PC-9 (cell line): ENCODE measurements at regions of chr1 and their contacts with region 1.

Region 1: GRCh38 chr1:152189657-152190442 is 30.8 kb upstream of the RPTN start:
- DNase-seq: peak in 1 of 2 experiments; percentile 53
- H3K4me3 ChIP-seq: no peak overlapping the region
- H3K27ac ChIP-seq: peak overlapping the region; percentile 40; the same call in 1 of the 2 replicates
- H3K4me1 ChIP-seq: peaks cover 27% of the 10 kb centered on the region
- H3K27me3 ChIP-seq: peaks cover 22% of the 10 kb centered on the region; the same call in 1 of the 2 replicates
- CTCF ChIP-seq: peak; percentile 86

Region 2: DNA sequence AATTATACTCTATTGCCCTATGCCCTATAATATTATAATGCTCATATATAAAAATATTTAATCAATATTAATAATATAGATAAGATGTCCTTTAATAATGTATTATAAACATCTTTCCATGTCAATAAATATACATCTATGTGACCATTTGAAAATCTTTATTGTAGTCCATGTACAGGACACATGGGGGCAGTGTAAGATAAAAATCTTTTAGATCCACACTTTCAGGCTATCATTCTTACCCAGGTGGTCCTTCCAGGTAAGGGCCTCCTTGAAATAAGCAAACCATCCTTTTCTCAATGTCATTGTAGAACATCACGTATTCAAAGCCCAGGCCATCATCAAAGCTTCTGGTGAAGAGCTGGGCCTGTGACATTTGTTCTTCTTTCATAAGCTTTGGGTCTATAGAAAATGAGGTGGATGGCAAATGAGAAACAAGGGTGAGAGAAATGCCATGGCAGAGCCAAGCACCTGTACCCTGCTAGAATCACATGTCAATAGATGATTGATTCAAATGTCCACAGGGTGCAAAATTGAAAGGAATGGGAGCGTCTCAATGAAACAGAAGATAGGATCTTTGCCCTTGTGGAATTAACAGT is 300.8 kb before region 1 on chr1:
- CTCF ChIA-PET with region 1: no interaction called
- POLR2A ChIA-PET with region 1: no interaction called
- intact Hi-C with region 1: loop called (anchors 5 kb)
- DNase-seq: peak in 1 of 2 experiments; percentile 38
- H3K4me3 ChIP-seq: no peak overlapping the region
- H3K27ac ChIP-seq: no peak overlapping the region
- H3K4me1 ChIP-seq: peaks cover 20% of the 10 kb centered on the region
- H3K27me3 ChIP-seq: no peaks in the 10 kb centered on the region
- CTCF ChIP-seq: peak; percentile 69

Region 3: DNA sequence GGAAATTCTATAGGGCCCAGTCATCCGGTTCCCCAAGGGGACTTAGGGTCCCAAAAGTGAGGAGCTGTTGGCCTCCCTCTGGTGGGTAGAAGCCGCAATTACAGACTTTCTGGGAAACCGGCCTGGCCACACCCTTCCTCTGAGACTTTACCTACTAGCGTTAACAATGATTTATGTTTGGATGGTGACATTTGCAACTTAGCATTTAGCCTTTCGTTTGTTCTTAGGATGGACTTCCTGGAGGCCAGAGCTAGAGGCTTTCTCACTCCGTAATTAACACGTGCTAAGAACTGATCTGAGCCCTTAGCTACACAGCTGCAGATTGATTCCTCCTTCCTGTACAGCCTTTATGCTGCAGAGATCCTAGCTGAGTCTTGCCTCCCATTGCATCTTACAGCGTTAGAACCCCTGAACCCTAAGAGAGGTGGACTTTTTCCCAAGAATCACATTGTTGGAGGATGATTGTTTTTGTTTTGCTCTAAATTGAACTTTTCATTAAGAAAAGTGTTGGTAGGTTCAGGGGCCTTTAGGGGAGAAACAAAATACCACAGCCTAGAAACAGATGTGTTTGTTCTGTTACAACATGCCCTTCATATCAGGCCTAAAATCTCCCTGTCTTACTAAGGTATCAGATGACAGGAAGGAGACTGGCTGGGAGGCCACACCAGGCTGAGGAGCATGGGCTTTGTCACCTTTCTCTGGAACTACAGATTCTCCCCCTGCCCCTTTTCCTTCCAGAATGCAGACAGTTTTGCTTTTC is 155.0 kb before region 1 on chr1:
- CTCF ChIA-PET with region 1: interaction called, 15 read pairs
- POLR2A ChIA-PET with region 1: no interaction called
- intact Hi-C with region 1: no loop called
- DNase-seq: peak; percentile 78 to 90
- H3K4me3 ChIP-seq: peak overlapping the region; percentile 89
- H3K27ac ChIP-seq: peak overlapping the region; percentile 97
- H3K4me1 ChIP-seq: peaks cover 66% of the 10 kb centered on the region
- H3K27me3 ChIP-seq: no peaks in the 10 kb centered on the region
- CTCF ChIP-seq: peak; percentile 94

Region 4: GRCh38 chr1:152096121-152096865 is 93.6 kb before region 1 on chr1:
- CTCF ChIA-PET with region 1: no interaction called
- POLR2A ChIA-PET with region 1: no interaction called
- intact Hi-C with region 1: no loop called
- DNase-seq: no peak
- H3K4me3 ChIP-seq: no peak overlapping the region
- H3K27ac ChIP-seq: no peak overlapping the region
- H3K4me1 ChIP-seq: no peaks in the 10 kb centered on the region
- H3K27me3 ChIP-seq: no peaks in the 10 kb centered on the region
- CTCF ChIP-seq: no peak

Region 5: GRCh38 chr1:152227310-152227928 is 37.6 kb after region 1 on chr1:
- CTCF ChIA-PET with region 1: interaction called, 12 read pairs
- POLR2A ChIA-PET with region 1: no interaction called
- intact Hi-C with region 1: no loop called
- DNase-seq: no peak
- H3K4me3 ChIP-seq: no peak overlapping the region
- H3K27ac ChIP-seq: no peak overlapping the region
- H3K4me1 ChIP-seq: no peaks in the 10 kb centered on the region
- H3K27me3 ChIP-seq: peaks cover 11% of the 10 kb centered on the region
- CTCF ChIP-seq: no peak; the same call in 1 of the 2 replicates

Region 6: GRCh38 chr1:152440635-152441471 is 251.0 kb after region 1 on chr1:
- CTCF ChIA-PET with region 1: no interaction called
- POLR2A ChIA-PET with region 1: no interaction called
- intact Hi-C with region 1: loop called (anchors 1 kb)
- DNase-seq: peak in 1 of 2 experiments; percentile 55
- H3K4me3 ChIP-seq: no peak overlapping the region
- H3K27ac ChIP-seq: no peak overlapping the region
- H3K4me1 ChIP-seq: no peaks in the 10 kb centered on the region
- H3K27me3 ChIP-seq: peaks cover 30% of the 10 kb centered on the region
- CTCF ChIP-seq: peak; percentile 87